ENCODE measurements at regions of chr18 and their contacts with region 1.

Region 1: GRCh38 chr18:46134920-46135675 is 30.9 kb downstream of the HAUS1 start:
- DNase-seq: no peak
- CTCF ChIP-seq: no peak

Region 2: GRCh38 chr18:46148810-46149209 is 13.7 kb after region 1 on chr18:
- CTCF ChIA-PET with region 1: interaction called, 17 read pairs
- POLR2A ChIA-PET with region 1: no interaction called
- DNase-seq: peak; percentile 43
- CTCF ChIP-seq: peak; percentile 67

Measured in GM10248 (cell line).